Activated CD4-positive, alpha-beta memory T cell treated with anti-CD3 and anti-CD28 coated beads for 36 hours (primary cell): ENCODE measurements at regions of chr5 and their contacts with region 1.

Region 1: GRCh38 chr5:94740286-94740685 is 121.8 kb downstream of the SLF1 start:
- DNase-seq: no peak
- H3K4me3 Mint-ChIP-seq: no peak overlapping the region
- H3K27ac Mint-ChIP-seq: no peak overlapping the region
- H3K4me1 Mint-ChIP-seq: peaks cover 1% of the 10 kb centered on the region
- H3K27me3 Mint-ChIP-seq: no peaks in the 10 kb centered on the region

Region 2: DNA sequence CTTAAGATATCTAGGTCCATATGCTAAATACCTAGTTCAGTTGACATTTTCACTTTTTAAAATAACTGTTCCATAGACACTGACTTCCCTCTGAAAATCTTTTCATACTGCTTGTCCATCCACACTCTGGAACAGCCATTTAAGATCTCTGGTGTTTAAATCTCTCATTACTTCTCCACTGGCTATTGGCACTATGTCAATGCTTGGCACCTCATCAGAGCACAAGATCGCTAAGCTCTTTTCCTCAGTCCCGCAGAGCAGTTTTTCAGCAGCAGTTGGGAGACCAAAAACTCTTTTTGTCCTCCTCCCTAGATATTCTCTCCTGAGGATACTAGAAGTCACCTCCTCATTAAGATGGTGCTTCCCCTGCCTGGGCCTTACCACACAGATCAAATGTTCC is 294.6 kb before region 1 on chr5:
- CTCF ChIA-PET with region 1: no interaction called
- POLR2A ChIA-PET with region 1: no interaction called
- intact Hi-C with region 1: no loop called
- DNase-seq: no peak
- H3K4me3 Mint-ChIP-seq: no peak overlapping the region
- H3K27ac Mint-ChIP-seq: no peak overlapping the region
- H3K4me1 Mint-ChIP-seq: no peaks in the 10 kb centered on the region
- H3K27me3 Mint-ChIP-seq: no peaks in the 10 kb centered on the region

Region 3: GRCh38 chr5:94613583-94613982 is 126.7 kb before region 1 on chr5:
- CTCF ChIA-PET with region 1: interaction called, 8 read pairs
- POLR2A ChIA-PET with region 1: no interaction called
- intact Hi-C with region 1: loop called (anchors 1 kb)
- DNase-seq: no peak
- H3K4me3 Mint-ChIP-seq: no peak overlapping the region
- H3K27ac Mint-ChIP-seq: no peak overlapping the region
- H3K4me1 Mint-ChIP-seq: peaks cover 22% of the 10 kb centered on the region
- H3K27me3 Mint-ChIP-seq: no peaks in the 10 kb centered on the region

Region 4: DNA sequence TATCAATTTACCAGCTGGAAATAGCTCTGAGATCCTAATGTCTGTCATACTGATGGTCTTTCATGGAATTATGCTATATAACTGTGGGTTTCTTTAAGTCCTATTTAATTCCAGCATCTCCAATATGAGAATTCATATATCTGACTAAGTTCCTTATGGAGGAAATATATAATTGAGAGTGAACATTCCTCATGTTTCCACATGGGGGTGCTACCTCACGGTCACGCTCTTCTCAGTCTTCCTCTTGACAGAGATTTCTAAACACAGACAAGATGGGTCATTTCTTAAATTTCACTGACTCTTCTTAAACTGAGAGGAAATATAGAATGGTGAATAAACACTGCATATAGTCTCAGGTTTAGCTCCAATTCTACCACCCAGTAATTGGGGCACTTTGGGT is 90.2 kb after region 1 on chr5:
- CTCF ChIA-PET with region 1: interaction called, 10 read pairs
- POLR2A ChIA-PET with region 1: no interaction called
- intact Hi-C with region 1: no loop called
- DNase-seq: no peak
- H3K4me3 Mint-ChIP-seq: no peak overlapping the region
- H3K27ac Mint-ChIP-seq: no peak overlapping the region
- H3K4me1 Mint-ChIP-seq: no peaks in the 10 kb centered on the region
- H3K27me3 Mint-ChIP-seq: peaks cover 25% of the 10 kb centered on the region

Region 5: DNA sequence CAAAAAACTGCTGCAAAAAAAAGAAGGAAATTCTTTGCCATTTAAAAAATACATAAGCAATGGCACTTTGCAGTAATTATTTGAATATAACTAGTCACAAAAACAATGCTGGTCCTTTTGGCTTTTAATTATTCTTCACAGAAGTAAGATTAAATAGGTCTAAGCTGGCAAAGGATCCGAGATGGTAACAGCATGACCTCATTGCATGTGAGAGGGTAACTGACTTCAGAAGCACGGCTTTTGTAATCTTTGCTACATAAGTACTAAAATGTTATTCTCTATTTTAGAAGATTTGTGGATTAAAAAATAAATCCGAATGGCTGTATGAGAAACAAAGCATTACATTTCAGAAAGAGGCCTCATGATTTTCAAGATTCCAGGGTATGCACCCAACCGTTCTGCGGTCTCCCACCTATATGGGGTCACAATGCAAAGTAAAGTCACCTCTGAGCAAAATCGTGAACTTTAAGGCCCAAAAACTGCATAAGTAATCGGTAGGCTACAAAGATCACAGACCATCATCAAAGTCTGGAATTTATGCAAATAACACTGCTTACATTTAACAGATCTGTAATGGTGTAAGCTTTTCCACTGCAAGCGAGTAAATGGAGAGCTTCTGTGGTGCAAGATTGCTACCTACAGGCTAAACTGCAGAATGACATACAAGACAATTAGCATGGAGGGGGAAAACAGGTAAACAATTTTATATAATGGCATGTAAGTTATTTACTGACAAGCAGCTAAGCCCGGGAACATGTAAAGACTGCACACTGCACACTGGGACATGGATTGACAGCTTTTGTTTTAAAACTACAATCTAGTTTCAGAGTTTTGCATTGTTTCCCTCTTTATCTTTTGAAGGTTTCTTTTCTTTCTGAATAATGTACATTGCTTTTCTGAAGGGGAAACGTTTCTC is 109.8 kb after region 1 on chr5:
- CTCF ChIA-PET with region 1: interaction called, 13 read pairs
- POLR2A ChIA-PET with region 1: no interaction called
- intact Hi-C with region 1: loop called (anchors 1 kb)
- DNase-seq: peak; percentile 17
- H3K4me3 Mint-ChIP-seq: no peak overlapping the region
- H3K27ac Mint-ChIP-seq: no peak overlapping the region
- H3K4me1 Mint-ChIP-seq: peaks cover 7% of the 10 kb centered on the region
- H3K27me3 Mint-ChIP-seq: peaks cover 1% of the 10 kb centered on the region

Region 6: GRCh38 chr5:94908889-94909480 is 168.7 kb after region 1 on chr5:
- CTCF ChIA-PET with region 1: no interaction called
- POLR2A ChIA-PET with region 1: no interaction called
- intact Hi-C with region 1: loop called (anchors 5 kb)
- DNase-seq: no peak
- H3K4me3 Mint-ChIP-seq: no peak overlapping the region
- H3K27ac Mint-ChIP-seq: no peak overlapping the region
- H3K4me1 Mint-ChIP-seq: no peaks in the 10 kb centered on the region
- H3K27me3 Mint-ChIP-seq: peaks cover 5% of the 10 kb centered on the region

Region 7: GRCh38 chr5:95043234-95043633 is 302.9 kb after region 1 on chr5:
- CTCF ChIA-PET with region 1: no interaction called
- POLR2A ChIA-PET with region 1: no interaction called
- intact Hi-C with region 1: no loop called
- DNase-seq: no peak
- H3K4me3 Mint-ChIP-seq: no peak overlapping the region
- H3K27ac Mint-ChIP-seq: no peak overlapping the region
- H3K4me1 Mint-ChIP-seq: no peaks in the 10 kb centered on the region
- H3K27me3 Mint-ChIP-seq: no peaks in the 10 kb centered on the region